ENCODE measurements at regions of chr18 and their contacts with region 1.

Region 1: GRCh38 chr18:13558124-13558523 is 168.2 kb downstream of the FAM210A start:
- DNase-seq: peak; percentile 56
- ATAC-seq: peak; percentile 60
- H3K4me3 Mint-ChIP-seq: peak overlapping the region; percentile 52
- H3K27ac Mint-ChIP-seq: peak overlapping the region; percentile 77
- H3K4me1 Mint-ChIP-seq: peaks cover 46% of the 10 kb centered on the region
- H3K27me3 Mint-ChIP-seq: no peaks in the 10 kb centered on the region
- CTCF ChIP-seq: peak; percentile 51

Region 2: DNA sequence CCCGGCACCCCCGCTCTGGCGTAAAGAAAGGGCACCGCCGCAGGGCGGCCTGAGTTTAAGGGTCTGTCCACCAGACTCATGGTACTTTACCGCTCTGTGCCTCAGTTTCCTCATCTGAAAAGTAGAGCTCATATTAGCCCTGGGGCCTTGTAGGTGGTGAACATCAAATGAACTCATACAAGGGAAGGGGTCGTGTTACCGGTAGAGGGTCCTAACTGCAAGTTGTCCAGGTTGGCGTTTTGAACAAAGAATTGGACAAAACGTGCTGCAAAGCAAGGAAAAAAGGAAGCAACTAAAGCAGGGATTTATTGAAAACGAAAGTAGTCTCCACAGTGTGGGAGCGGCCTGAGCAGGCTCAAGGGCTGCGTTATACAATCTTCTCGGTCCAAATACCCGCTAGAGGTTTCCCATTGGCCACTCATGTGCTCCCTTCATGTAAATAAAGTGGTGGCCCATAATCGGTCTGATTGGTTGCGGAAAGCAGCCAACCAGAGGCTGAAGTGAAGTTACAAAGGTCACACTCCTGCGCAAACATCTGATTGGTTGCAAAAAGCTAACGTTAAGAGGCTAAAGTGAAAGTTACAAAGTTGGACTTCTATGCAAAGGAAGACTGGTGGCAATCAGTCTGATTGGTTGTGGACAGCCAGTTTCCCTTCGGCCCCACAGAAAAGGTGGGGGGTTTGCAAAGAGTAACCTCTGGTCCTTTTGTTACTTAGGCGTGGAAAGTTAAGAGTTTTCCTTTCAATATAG is 420.3 kb before region 1 on chr18:
- CTCF ChIA-PET with region 1: no interaction called
- POLR2A ChIA-PET with region 1: interaction called, 4 read pairs
- intact Hi-C with region 1: loop called (anchors 5 kb)
- DNase-seq: peak; percentile 43
- ATAC-seq: peak; percentile 87
- H3K4me3 Mint-ChIP-seq: peak overlapping the region; percentile 98
- H3K27ac Mint-ChIP-seq: peak overlapping the region; percentile 97
- H3K4me1 Mint-ChIP-seq: peaks cover 23% of the 10 kb centered on the region
- H3K27me3 Mint-ChIP-seq: no peaks in the 10 kb centered on the region
- CTCF ChIP-seq: no peak

Region 3: DNA sequence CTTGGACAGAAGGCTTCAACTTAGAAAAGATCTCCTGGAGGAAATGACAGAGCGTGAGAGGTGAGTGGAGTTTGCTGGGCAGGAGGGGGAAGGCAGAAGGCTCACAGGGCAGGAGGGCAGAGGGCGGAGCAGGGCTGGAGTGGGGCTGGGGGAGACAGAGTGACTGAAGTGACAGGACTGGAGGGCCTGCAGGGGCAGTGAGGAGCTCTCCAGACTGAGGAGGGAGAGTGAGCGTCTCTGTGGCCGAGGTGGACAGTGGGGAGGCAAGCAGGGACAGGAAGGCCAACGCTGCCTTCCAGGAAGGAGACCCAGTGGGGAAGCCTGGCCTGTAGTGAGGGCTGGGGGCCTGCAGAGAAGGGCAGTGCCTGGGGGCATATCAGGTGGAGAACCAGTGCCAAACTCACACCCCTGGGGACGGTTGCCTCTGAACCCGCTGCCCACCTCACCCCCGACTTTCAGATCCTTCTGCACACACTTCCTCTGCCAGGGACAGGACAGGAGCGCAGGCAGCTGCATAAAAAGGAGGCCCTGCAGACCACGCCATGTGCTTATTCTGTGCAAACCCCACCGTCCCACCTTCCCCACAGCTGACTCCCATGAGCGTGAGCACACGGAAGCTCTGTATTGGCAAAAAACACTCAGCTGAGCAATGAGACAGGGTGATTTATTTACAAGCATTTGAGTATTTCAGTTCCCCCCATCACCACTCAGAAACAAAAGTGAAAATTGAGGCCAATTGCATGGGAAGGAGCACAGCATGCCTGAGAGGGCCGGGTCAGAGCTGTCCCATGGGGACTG is 76.1 kb before region 1 on chr18:
- CTCF ChIA-PET with region 1: no interaction called
- POLR2A ChIA-PET with region 1: no interaction called
- intact Hi-C with region 1: loop called (anchors 1 kb)
- DNase-seq: no peak
- ATAC-seq: peak; percentile 92
- H3K4me3 Mint-ChIP-seq: peak overlapping the region; percentile 75
- H3K27ac Mint-ChIP-seq: peak overlapping the region; percentile 84
- H3K4me1 Mint-ChIP-seq: peaks cover 36% of the 10 kb centered on the region
- H3K27me3 Mint-ChIP-seq: no peaks in the 10 kb centered on the region
- CTCF ChIP-seq: no peak

Region 4: DNA sequence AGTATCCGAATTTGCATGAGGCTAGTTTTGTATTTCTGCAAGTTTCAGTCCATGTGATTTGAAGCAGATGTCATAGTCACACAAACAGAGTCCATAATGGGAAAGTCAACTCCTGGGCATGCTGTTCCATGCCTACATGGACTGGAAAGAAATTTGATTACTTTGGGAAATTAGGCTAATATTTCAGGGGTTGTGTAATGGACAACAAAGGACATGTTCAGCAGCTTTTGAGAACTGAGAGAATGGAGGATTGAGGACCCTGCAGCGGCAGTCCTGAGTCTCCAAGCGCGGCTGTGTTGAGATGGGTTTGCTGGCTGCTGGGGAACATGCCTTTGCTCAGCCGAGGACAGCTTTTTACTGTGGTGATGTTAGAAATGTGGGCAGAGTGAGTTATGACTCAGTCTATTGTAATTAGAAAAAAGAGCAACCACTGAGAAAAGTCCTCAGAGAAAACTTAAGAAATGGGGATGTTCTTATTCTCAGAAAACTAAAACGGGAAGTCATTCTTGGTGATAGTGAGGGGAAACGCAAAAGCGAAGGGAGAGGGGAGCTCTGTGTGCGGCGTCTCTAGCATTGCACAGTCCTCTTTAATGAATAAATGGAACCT is 19.1 kb after region 1 on chr18:
- CTCF ChIA-PET with region 1: interaction called, 17 read pairs
- POLR2A ChIA-PET with region 1: interaction called, 147 read pairs
- intact Hi-C with region 1: loop called (anchors 1 kb)
- DNase-seq: no peak
- ATAC-seq: peak; percentile 86
- H3K4me3 Mint-ChIP-seq: peak overlapping the region; percentile 68
- H3K27ac Mint-ChIP-seq: peak overlapping the region; percentile 86
- H3K4me1 Mint-ChIP-seq: peaks cover 49% of the 10 kb centered on the region
- H3K27me3 Mint-ChIP-seq: no peaks in the 10 kb centered on the region
- CTCF ChIP-seq: no peak

Region 5: DNA sequence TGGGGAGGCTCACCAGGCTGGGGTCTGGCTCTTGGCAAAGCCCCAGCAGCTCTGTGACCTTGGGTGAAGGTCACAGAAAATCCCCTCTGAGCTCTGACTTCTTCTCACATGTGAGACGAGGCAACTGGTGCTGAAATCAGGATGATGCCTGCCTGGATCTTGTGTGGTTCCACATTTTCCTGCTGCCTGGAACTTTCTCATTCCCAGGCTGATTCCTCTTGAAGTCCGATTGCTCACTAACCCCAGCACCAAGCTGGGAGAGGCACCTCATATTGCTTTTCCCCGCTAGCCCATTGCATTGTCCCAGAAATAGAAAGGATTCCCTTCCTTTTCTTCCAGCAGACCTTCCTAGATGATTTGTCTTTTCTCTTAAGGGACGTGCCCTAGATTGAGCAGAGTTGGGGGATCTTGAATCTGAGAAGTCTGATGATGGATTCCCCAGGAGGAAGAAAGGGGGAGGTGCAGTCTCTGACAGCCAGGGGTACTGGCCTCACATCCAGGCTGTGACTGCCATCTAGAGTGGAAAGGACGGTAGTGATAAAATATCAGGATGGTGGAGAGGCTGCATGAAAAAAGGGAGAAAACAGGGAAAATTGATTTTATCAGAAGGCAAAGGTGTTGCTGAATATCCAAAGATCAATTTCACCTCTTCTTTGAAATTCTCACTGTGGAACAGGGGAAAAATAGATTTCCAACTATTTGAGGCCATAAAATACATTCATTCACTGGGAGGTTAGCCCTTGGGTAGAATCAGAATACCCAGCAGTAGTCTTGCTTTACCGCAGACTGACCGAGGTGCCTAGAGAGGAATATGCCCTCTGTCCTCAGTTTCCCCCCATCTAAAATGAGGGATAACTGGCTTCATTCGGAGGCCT is 72.0 kb after region 1 on chr18:
- CTCF ChIA-PET with region 1: interaction called, 121 read pairs
- POLR2A ChIA-PET with region 1: interaction called, 16 read pairs
- intact Hi-C with region 1: loop called (anchors 1 kb)
- DNase-seq: no peak
- ATAC-seq: peak; percentile 95
- H3K4me3 Mint-ChIP-seq: peak overlapping the region; percentile 17
- H3K27ac Mint-ChIP-seq: peak overlapping the region; percentile 63
- H3K4me1 Mint-ChIP-seq: peaks cover 24% of the 10 kb centered on the region
- H3K27me3 Mint-ChIP-seq: no peaks in the 10 kb centered on the region
- CTCF ChIP-seq: peak; percentile 68

Region 6: DNA sequence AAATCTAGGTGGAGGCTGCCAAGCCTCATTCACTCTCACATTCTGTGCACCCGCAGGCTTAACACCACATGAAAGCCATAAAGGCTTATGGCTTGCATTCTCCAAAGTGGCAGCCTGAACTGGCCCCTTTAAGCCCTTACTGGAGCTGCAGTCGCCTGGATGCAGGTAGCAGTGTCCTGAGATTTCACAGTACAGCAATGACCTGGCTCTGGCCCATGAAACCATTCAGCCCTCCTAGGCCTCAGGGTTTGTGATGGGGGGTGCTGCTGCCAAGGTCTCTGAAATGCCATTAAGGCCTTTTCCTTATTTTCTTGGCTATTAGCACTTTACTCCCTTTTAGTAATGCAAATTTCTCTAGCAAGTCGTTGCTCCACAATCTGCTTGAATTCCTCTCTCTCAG is 216.9 kb after region 1 on chr18:
- CTCF ChIA-PET with region 1: no interaction called
- POLR2A ChIA-PET with region 1: no interaction called
- intact Hi-C with region 1: no loop called
- DNase-seq: no peak
- ATAC-seq: no peak
- H3K4me3 Mint-ChIP-seq: no peak overlapping the region
- H3K27ac Mint-ChIP-seq: no peak overlapping the region
- H3K4me1 Mint-ChIP-seq: no peaks in the 10 kb centered on the region
- H3K27me3 Mint-ChIP-seq: peaks cover 8% of the 10 kb centered on the region
- CTCF ChIP-seq: no peak

Region 7: GRCh38 chr18:13813271-13813849 is 255.2 kb after region 1 on chr18:
- CTCF ChIA-PET with region 1: interaction called, 13 read pairs
- POLR2A ChIA-PET with region 1: no interaction called
- intact Hi-C with region 1: loop called (anchors 1 kb)
- DNase-seq: no peak
- ATAC-seq: peak; percentile 81
- H3K4me3 Mint-ChIP-seq: no peak overlapping the region
- H3K27ac Mint-ChIP-seq: no peak overlapping the region
- H3K4me1 Mint-ChIP-seq: no peaks in the 10 kb centered on the region
- H3K27me3 Mint-ChIP-seq: peaks cover 2% of the 10 kb centered on the region
- CTCF ChIP-seq: peak; percentile 77